ENCODE measurements at regions of chr16 and their contacts with region 1.

Region 1: GRCh38 chr16:75379911-75380847 is 53.1 kb downstream of the CFDP1 start:
- DNase-seq: no peak
- ATAC-seq: peak in 2 of 8 donors; percentile 29 to 49
- H3K4me3 ChIP-seq: no peak overlapping the region
- H3K27ac ChIP-seq: peak overlapping the region in 3 of 10 donors; percentile 27 to 64 (median 28)
- H3K4me1 ChIP-seq: peaks cover 0 to 49% (median 14%) of the 10 kb centered on the region in 9 donors
- H3K27me3 ChIP-seq: peaks cover 0 to 69% (median 0%) of the 10 kb centered on the region in 7 donors
- CTCF ChIP-seq: no peak

Region 2: DNA sequence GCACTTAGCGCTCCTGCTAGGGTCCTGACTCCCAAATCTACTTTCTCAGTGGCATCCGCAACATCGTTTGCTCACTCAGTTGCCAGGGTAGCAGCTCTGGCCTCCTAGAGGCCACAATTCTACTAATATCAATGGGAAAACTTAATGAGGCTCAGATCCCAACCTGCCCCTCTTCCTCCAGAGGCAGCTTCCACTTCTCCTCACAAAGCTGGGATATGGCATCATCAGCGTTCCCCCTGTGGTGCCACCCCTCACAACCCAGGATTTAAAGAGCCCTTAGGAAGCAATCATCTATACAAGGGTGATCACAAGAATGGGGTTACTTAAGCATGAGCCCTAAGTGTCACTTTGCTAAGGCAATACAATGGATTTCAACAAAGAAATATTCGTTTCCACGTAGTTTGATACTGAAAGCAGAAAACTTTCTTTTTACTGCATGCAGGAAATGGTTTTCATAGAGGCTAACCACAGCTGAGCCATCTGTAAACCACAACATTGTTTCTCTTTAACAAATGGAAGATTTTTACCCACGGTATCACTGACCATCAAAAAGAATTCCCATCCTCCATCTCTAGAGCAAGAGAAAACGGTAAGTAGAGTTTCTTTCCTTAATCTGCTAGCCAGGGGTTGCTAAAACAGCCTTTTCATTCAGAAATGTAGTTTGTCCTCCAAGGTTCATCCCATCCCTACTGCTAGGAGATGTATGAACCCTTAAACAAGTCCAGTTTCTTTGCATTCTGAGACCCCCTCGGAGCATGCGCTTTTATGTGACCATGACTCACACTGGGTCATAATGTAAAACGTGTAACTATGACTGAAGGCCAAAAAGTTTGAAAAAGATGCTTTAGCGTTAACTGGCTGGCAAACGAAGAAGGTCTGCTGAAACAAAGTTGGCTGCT is 60.4 kb before region 1 on chr16:
- intact Hi-C with region 1: loop called in 3 of 10 experiments (anchors 10 kb)
- DNase-seq: no peak
- ATAC-seq: no peak
- H3K4me3 ChIP-seq: no peak overlapping the region
- H3K27ac ChIP-seq: peak overlapping the region in 5 of 10 donors; percentile 8 to 77 (median 24)
- H3K4me1 ChIP-seq: peaks cover 0 to 47% (median 8%) of the 10 kb centered on the region in 9 donors
- H3K27me3 ChIP-seq: peaks cover 0 to 71% (median 0%) of the 10 kb centered on the region in 7 donors
- CTCF ChIP-seq: no peak

Region 3: GRCh38 chr16:75326333-75326732 is 53.8 kb before region 1 on chr16:
- intact Hi-C with region 1: loop called in 2 of 10 experiments (anchors 5 to 10 kb)
- DNase-seq: no peak
- ATAC-seq: no peak
- H3K4me3 ChIP-seq: no peak overlapping the region
- H3K27ac ChIP-seq: no peak overlapping the region
- H3K4me1 ChIP-seq: peaks cover 0 to 9% (median 0%) of the 10 kb centered on the region in 9 donors
- H3K27me3 ChIP-seq: peaks cover 0 to 84% (median 0%) of the 10 kb centered on the region in 7 donors
- CTCF ChIP-seq: no peak